ENCODE measurements at regions of chr5 and their contacts with region 1.

Region 1: DNA sequence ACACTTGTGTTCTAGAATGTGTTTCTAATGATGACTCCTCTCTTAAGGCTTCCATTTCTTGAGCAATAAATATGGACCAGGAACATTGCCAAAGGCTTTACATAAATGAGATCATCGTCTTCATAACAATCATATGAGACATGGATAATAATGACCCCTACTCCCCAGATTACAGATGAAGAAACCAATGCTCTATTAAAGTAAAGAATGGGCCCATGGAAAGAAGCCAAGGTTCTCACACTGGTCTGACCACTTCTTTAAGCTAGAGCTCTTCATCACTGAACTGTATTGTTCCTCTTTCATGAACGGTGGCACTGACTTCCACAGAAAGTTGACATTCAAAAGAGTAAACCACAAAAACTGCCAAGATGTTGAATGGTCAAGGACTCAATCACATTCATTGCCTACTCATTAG is 65.3 kb downstream of the MARCHF3 start:
- DNase-seq: peak; percentile 86
- H3K4me3 ChIP-seq: no peak overlapping the region
- H3K27ac ChIP-seq: no peak overlapping the region
- H3K4me1 ChIP-seq: peaks cover 10% of the 10 kb centered on the region
- H3K27me3 ChIP-seq: no peaks in the 10 kb centered on the region
- CTCF ChIP-seq: no peak

Region 2: GRCh38 chr5:126552614-126553013 is 412.5 kb before region 1 on chr5:
- CTCF ChIA-PET with region 1: interaction called, 11 read pairs
- dilution Hi-C with region 1: no loop called
- in situ Hi-C with region 1: no loop called
- intact Hi-C with region 1: no loop called
- DNase-seq: no peak
- H3K4me3 ChIP-seq: no peak overlapping the region
- H3K27ac ChIP-seq: no peak overlapping the region
- H3K4me1 ChIP-seq: no peaks in the 10 kb centered on the region
- H3K27me3 ChIP-seq: no peaks in the 10 kb centered on the region
- CTCF ChIP-seq: no peak

Region 3: DNA sequence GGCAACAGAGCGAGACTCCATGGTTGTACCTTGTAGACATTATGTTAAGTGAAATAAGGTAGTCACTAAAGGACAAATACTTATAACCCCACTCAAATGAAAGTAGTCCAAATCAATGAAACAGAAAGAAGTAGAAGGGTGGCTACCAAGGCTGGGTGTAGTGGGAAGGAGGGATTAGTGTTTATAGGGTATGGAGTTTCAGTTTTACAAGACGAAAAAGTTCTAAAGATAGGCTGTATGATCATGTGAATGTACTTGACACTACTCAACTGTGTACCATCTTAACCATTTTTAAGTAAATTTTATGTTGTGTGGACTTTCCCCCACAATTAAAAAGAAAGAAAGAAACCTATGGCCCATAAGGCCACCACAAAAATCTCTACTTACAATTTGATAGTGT is 402.2 kb before region 1 on chr5:
- CTCF ChIA-PET with region 1: no interaction called
- dilution Hi-C with region 1: no loop called
- in situ Hi-C with region 1: no loop called
- intact Hi-C with region 1: no loop called
- DNase-seq: no peak
- H3K4me3 ChIP-seq: no peak overlapping the region
- H3K27ac ChIP-seq: no peak overlapping the region
- H3K4me1 ChIP-seq: no peaks in the 10 kb centered on the region
- H3K27me3 ChIP-seq: no peaks in the 10 kb centered on the region
- CTCF ChIP-seq: no peak

Region 4: DNA sequence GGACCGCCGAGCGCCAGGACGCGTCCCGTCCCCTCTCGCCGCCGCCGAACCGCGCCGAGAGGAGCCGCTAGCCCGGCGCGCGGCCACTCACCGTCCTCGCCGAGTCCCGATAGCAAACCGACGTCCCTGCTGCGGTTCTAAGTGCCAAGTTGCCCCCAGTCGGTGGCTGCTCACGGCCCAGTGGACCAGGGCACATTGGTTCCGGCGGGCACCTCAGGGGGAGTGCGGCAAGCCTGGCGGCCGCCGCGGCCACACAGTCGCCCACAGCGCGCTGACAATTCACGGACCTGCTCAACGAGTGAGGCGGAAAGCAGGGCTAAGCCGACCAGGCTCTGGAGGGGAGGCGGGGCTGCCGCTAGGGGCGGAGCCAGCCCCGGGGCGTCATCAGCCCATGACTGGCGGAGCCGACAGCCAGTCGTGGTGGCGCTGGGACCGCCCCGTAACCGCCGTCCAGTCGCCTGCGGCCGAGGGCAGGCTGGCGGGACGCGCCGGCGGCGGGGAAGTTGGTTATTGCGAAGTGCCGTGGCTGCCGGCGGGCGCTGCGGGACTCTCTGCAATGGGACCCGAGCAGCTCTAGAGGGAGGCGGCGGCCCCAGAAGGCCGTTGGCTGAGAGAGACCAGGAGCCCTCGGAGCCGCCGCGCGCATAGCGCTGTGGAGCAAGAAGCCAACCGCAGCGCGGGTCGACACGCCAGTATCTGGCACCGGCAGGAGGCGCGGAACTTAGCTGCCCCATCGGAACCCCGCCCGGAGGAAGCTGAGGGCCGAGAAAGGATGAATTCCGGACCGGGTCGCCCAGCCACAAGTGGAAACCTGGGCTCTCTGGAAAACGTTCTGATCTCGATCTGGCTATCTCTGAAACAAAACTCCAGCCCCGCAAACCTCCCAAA is 65.4 kb after region 1 on chr5 and contains the start of gene MARCHF3:
- CTCF ChIA-PET with region 1: no interaction called
- dilution Hi-C with region 1: no loop called
- in situ Hi-C with region 1: no loop called
- intact Hi-C with region 1: loop called (anchors 5 kb)
- DNase-seq: peak; percentile 96
- H3K4me3 ChIP-seq: peak within 1 kb of the TSS; percentile 63 to 98 (median 80)
- H3K27ac ChIP-seq: peak within 1 kb of the TSS; percentile 44
- H3K4me1 ChIP-seq: peaks cover 12% of the 10 kb centered on the region
- H3K27me3 ChIP-seq: no peaks in the 10 kb centered on the region
- CTCF ChIP-seq: peak in 1 of 2 donors; percentile 42
- total RNA-seq, gene MARCHF3: 4.0 to 5.0 TPM

Measured in mammary epithelial cell (primary cell).